Dorsolateral prefrontal cortex (tissue), 120 donors: ENCODE measurements at regions of chrX and their contacts with region 1.

Region 1: GRCh38 chrX:93673056-93673868 is at the start of gene NAP1L3:
- DNase-seq: peak; percentile 62 to 89 (median 85)
- H3K4me3 ChIP-seq: peak within 1 kb of the TSS; percentile 43 to 86 (median 71)
- H3K27ac ChIP-seq: peak within 1 kb of the TSS; percentile 16 to 98 (median 93)
- H3K27me3 ChIP-seq: peaks cover 0 to 49% (median 5%) of the 10 kb centered on the region in 45 donors
- CTCF ChIP-seq: peak in 1 of 56 donors; percentile 18
- total RNA-seq, gene NAP1L3: 36.8 to 230 (median 163) TPM

Region 2: GRCh38 chrX:93591398-93591797 is 81.9 kb before region 1 on chrX:
- intact Hi-C with region 1: loop called in 1 of 2 experiments (anchors 10 kb)
- DNase-seq: no peak
- H3K4me3 ChIP-seq: no peak overlapping the region
- H3K27ac ChIP-seq: peak overlapping the region in 23 of 59 donors; percentile 2 to 79 (median 52)
- H3K27me3 ChIP-seq: peaks cover 0 to 32% (median under 1%) of the 10 kb centered on the region in 45 donors
- CTCF ChIP-seq: peak in 40 of 56 donors; percentile 9 to 68 (median 46)

Region 3: GRCh38 chrX:93637591-93637990 is 35.7 kb before region 1 on chrX:
- intact Hi-C with region 1: no loop called
- DNase-seq: no peak
- H3K4me3 ChIP-seq: no peak overlapping the region
- H3K27ac ChIP-seq: no peak overlapping the region
- H3K27me3 ChIP-seq: peaks cover 0 to 36% (median 2%) of the 10 kb centered on the region in 45 donors
- CTCF ChIP-seq: no peak